ENCODE measurements at regions of chr3 and their contacts with region 1.

Region 1: DNA sequence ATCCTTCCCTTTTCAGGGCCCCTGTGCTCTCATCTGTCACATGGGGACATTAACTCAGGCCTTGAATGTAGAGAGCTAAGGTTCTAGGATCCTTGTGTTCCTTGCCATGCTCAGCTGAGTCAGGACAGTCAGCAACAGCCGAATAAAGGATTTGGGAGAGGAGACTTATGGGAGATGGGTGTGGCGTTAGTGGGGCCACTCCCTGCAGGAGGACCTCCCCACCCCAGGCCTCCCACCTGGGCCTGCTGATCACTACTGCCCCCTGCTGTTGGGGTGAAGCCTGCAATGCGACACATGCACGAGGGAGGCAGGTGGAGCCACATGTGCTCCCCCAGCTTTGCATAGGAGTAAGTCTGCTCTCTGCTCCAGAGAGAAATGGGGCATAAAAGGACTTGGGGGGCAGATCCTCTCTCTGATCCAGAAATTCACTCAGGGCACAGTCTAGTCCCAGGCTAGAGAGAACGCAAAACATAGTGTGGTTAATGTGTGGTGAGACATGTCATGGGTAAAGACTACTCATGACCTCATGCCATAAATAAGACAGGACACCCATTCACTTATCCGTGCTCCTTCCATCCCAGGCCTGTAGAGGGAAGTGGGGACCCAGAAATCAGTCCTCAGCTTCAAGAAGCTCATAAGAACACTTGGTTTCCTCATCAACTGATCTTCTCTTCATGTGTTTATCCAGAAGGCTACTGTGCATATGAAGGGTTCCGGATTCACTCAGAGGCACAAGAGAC is 19.4 kb downstream of the RBP1 start:
- DNase-seq: peak; percentile 73
- ATAC-seq: peak; percentile 78
- H3K4me3 Mint-ChIP-seq: no peak overlapping the region
- H3K27ac Mint-ChIP-seq: no peak overlapping the region
- H3K4me1 Mint-ChIP-seq: peaks cover 26% of the 10 kb centered on the region
- H3K27me3 Mint-ChIP-seq: peaks cover 21% of the 10 kb centered on the region
- CTCF ChIP-seq: peak; percentile 70

Region 2: DNA sequence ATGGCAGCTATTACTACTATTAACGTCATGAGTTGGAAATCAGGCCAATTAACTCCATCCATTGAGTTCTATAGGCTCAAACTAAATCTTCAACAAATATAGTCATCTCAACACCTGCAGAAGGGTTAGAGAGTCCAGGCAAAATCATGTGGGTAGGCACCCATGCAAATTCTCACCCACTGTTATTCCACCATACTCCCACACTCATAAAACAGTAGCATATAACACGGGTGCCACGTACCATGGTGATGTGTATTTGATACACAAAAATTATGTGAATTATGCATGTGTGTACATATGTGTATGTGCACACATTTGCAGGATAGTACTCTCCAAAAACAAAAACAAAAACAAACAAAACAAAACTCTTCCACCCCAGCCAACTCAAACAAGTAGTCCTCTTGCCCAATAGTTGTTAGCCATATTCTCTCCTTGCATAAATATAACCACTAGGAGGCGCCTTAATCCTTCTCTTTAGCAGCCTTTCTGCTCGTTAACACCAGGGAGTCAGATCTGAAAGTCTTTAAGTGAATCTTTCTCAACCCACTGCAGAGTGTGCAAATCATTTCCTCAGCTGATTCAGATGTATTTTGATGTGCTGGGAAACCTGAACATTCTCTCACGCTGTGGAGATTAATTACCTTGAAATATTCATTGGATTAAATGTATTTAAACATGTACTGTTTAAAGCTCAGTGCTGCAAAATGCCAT is 92.7 kb before region 1 on chr3:
- CTCF ChIA-PET with region 1: interaction called, 12 read pairs
- POLR2A ChIA-PET with region 1: no interaction called
- DNase-seq: no peak
- ATAC-seq: peak; percentile 67
- H3K4me3 Mint-ChIP-seq: no peak overlapping the region
- H3K27ac Mint-ChIP-seq: no peak overlapping the region
- H3K4me1 Mint-ChIP-seq: peaks cover 4% of the 10 kb centered on the region; the same call in 1 of the 2 replicates
- H3K27me3 Mint-ChIP-seq: no peaks in the 10 kb centered on the region
- CTCF ChIP-seq: peak; percentile 73

Region 3: GRCh38 chr3:139448104-139448503 is 72.1 kb before region 1 on chr3:
- CTCF ChIA-PET with region 1: no interaction called
- POLR2A ChIA-PET with region 1: no interaction called
- DNase-seq: no peak
- ATAC-seq: no peak
- H3K4me3 Mint-ChIP-seq: no peak overlapping the region
- H3K27ac Mint-ChIP-seq: no peak overlapping the region
- H3K4me1 Mint-ChIP-seq: peaks cover 10% of the 10 kb centered on the region
- H3K27me3 Mint-ChIP-seq: peaks cover under 1% of the 10 kb centered on the region; the same call in 1 of the 2 replicates
- CTCF ChIP-seq: no peak

Region 4: GRCh38 chr3:139506766-139507165 is 13.4 kb before region 1 on chr3:
- CTCF ChIA-PET with region 1: interaction called, 10 read pairs
- POLR2A ChIA-PET with region 1: no interaction called
- DNase-seq: no peak
- ATAC-seq: peak; percentile 90
- H3K4me3 Mint-ChIP-seq: no peak overlapping the region
- H3K27ac Mint-ChIP-seq: no peak overlapping the region
- H3K4me1 Mint-ChIP-seq: no peaks in the 10 kb centered on the region
- H3K27me3 Mint-ChIP-seq: no peaks in the 10 kb centered on the region
- CTCF ChIP-seq: no peak

Region 5: GRCh38 chr3:139561959-139562676 is 42.0 kb after region 1 on chr3:
- CTCF ChIA-PET with region 1: interaction called, 12 read pairs
- POLR2A ChIA-PET with region 1: no interaction called
- DNase-seq: peak; percentile 72
- ATAC-seq: peak; percentile 83
- H3K4me3 Mint-ChIP-seq: no peak overlapping the region
- H3K27ac Mint-ChIP-seq: no peak overlapping the region
- H3K4me1 Mint-ChIP-seq: peaks cover 8% of the 10 kb centered on the region
- H3K27me3 Mint-ChIP-seq: no peaks in the 10 kb centered on the region
- CTCF ChIP-seq: peak; percentile 74

Measured in WTC11 (cell line).